ENCODE measurements at regions of chr16 and their contacts with region 1.

Region 1: GRCh38 chr16:75519881-75520280 is 16.0 kb downstream of the CHST5 start:
- DNase-seq: no peak
- H3K4me3 ChIP-seq: no peak overlapping the region
- CTCF ChIP-seq: no peak

Region 2: DNA sequence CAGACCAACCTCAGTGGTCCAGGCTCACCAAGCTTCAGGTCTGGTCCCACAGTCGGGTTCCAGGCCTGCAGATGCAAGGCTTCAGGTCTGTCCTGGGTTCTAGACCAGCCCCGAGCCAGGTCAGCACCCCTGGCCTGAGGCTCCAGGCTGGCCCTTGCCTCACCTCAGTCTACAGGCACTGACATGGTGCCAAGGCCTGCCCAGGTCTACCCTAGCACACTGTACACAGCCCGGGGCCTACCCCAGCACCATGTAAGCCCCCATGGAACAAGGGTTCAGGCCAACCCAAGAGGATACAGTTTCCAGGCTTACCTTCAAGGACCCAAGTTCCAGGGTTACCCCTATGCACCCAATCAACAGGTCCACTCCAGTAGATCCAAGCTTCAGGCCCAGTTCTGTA is 344.8 kb before region 1 on chr16:
- CTCF ChIA-PET with region 1: no interaction called
- POLR2A ChIA-PET with region 1: no interaction called
- DNase-seq: no peak
- H3K4me3 ChIP-seq: no peak overlapping the region
- CTCF ChIP-seq: no peak

Region 3: DNA sequence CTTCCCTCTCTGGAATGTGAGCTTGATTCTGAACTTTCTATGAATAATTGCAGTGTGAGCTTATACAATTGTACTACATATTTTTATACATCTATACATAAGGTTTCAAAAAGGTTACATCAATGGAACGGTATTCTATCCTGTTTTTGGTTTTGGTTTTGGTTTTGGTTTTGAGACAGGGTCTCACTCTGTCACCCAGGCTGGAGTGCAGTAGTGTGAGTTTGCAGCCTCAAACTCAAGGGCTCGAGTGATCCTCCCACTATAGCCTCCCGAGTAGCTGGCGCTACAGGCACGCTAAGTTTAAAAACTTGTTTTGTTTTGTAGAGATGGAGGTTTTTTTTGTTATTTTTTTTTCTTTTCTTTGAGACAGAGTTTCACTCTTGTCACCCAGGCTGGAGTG is 300.0 kb before region 1 on chr16:
- CTCF ChIA-PET with region 1: no interaction called
- POLR2A ChIA-PET with region 1: no interaction called
- DNase-seq: no peak
- H3K4me3 ChIP-seq: no peak overlapping the region
- CTCF ChIP-seq: no peak

Region 4: DNA sequence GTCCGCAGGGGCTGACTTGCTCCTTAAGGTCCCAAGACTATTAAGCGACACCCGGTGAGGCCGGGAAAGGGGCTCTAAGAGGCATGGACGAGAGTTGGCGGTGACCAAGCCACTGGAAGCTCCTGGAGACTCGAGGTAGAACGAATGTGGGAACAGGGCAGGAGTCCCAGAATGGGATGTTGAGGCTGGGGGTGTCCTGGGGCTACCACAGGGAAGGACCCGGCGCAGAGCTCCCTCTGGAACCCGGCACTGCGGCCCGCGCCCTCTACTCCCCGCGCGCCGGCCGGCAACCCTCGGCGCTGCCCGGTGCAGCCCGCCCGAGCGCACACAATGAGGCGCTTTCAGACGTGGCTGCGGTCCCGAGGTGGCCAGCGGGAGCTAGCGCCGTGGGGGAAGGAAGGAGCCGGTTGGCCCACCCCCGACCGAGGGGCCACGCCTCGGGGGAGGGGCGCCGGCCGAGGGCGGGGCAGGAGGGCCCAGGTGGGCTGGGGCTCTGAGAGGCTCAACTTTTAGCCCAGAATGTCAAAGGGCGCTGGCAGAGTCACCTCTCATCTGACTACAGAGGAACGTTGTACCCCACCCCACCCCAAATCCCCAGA is 24.7 kb before region 1 on chr16 and contains the start of gene CHST6:
- CTCF ChIA-PET with region 1: interaction called, 15 read pairs
- POLR2A ChIA-PET with region 1: interaction called, 3 read pairs
- DNase-seq: no peak
- H3K4me3 ChIP-seq: peak within 1 kb of the TSS; percentile 40
- CTCF ChIP-seq: no peak

Region 5: DNA sequence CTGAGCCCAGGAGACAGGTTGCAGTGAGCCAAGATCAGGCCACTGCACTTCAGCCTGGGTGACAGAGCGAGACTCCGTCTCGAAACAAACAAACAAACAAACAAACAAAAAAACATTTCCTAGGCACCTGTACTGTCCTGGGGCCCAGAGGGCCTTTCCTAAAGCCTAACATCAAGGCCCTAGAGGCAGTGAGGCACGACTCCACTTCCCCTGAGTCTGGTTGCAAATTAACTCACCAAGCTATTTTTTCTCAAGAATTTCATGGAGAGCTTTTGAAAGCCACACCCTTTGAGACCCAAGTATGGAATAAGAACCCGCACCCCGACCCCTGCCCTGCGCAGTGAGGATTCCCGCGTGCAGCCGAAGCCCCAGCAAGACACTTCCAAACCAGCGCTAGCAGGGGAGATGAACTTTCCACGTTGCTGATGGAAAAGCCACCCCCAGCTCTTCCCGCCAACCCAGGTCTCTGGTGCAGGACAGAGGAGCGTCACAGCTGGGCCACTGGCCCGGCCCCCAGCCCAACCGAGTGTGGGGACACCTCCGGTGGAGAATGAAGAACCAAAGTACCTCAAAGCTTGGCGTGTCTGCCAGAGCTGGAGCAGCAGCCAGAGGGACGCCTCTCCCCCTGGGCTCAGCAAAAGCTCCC is 14.8 kb after region 1 on chr16:
- CTCF ChIA-PET with region 1: interaction called, 22 read pairs
- POLR2A ChIA-PET with region 1: interaction called, 4 read pairs
- DNase-seq: no peak
- H3K4me3 ChIP-seq: no peak overlapping the region
- CTCF ChIP-seq: no peak

Region 6: GRCh38 chr16:75555707-75556430 is 36.0 kb after region 1 on chr16 and contains the start of gene TMEM231:
- CTCF ChIA-PET with region 1: interaction called, 24 read pairs
- POLR2A ChIA-PET with region 1: interaction called, 3 read pairs
- DNase-seq: peak; percentile 29
- H3K4me3 ChIP-seq: peak within 1 kb of the TSS; percentile 73
- CTCF ChIP-seq: peak; percentile 3

Region 7: DNA sequence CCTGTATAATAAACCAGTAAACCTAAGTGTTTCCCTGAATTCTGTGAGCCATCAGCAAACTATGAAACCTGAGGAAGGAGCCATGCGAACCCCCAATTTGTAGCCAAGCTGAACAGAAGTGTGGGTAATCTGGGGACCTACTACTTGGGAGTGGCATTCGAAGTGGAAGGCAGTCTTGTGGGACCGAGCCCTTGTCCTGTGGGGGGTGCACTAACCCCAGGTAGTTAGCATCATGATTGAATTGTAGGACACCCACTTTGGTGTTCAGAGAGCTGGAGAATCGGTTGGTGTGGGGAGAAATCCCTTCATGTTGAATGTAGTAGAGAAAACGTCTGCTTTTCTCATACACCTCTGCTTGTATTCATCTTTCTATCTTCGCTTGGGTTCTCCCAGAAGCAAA is 286.1 kb after region 1 on chr16:
- CTCF ChIA-PET with region 1: no interaction called
- POLR2A ChIA-PET with region 1: no interaction called
- DNase-seq: no peak
- H3K4me3 ChIP-seq: no peak overlapping the region
- CTCF ChIP-seq: no peak

Measured in AG04449 (cell line).